Endothelial cell of umbilical vein (primary cell): ENCODE measurements at regions of chr17 and their contacts with region 1.

Region 1: GRCh38 chr17:9007052-9007714 is 14.1 kb upstream of the NTN1 start:
- DNase-seq: no peak
- H3K4me3 ChIP-seq: no peak overlapping the region
- H3K27ac ChIP-seq: no peak overlapping the region
- H3K4me1 ChIP-seq: no peaks in the 10 kb centered on the region
- H3K27me3 ChIP-seq: peaks cover 26% of the 10 kb centered on the region in 2 experiments
- CTCF ChIP-seq: no peak
- POLR2A ChIP-seq: no peak

Region 2: DNA sequence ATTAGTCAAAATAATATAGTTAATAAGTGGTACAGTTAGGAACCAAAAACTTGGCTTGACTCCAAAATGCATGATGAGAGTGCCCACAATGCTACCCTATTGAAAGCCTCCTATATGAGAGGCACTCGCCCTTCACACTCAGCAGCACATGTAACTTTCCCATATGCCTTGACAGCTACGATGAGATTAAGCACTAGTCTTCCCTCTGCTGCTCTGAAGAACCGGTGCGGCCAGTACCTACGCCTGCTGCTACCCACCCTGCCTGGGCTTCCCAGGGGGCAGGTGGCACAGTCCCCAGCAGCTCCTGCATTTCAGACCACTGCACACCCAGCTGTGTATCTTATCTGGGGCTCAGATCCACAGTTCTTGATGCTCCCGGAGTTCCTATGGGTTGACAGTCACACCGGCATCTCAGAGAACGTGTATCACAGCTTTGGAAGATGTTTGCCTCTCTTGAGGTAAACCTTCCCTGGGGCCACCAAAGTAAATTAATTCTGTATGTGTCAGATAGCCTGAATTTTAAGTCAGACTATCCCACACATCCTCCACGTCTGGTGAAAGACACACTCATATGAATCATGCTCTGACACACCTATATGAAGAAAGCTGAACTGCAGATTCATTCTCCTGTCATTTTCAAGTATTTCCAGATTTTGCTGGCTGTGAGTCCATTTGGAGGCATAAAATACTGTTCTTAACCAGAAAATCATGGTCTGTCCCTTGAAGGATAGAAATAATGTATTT is 454.4 kb before region 1 on chr17:
- CTCF ChIA-PET with region 1: no interaction called
- POLR2A ChIA-PET with region 1: no interaction called
- dilution Hi-C with region 1: no loop called
- intact Hi-C with region 1: no loop called
- DNase-seq: no peak
- H3K4me3 ChIP-seq: no peak overlapping the region
- H3K27ac ChIP-seq: no peak overlapping the region
- H3K4me1 ChIP-seq: no peaks in the 10 kb centered on the region
- H3K27me3 ChIP-seq: no peaks in the 10 kb centered on the region
- CTCF ChIP-seq: no peak
- POLR2A ChIP-seq: no peak

Region 3: GRCh38 chr17:9028202-9028987 is 21.2 kb after region 1 on chr17:
- CTCF ChIA-PET with region 1: no interaction called
- POLR2A ChIA-PET with region 1: no interaction called
- dilution Hi-C with region 1: no loop called
- intact Hi-C with region 1: no loop called
- DNase-seq: no peak
- H3K4me3 ChIP-seq: no peak overlapping the region
- H3K27ac ChIP-seq: no peak overlapping the region
- H3K4me1 ChIP-seq: no peaks in the 10 kb centered on the region
- H3K27me3 ChIP-seq: peaks cover 11 to 21% of the 10 kb centered on the region in 2 experiments
- CTCF ChIP-seq: no peak
- POLR2A ChIP-seq: no peak

Region 4: GRCh38 chr17:9052921-9053320 is 45.7 kb after region 1 on chr17:
- CTCF ChIA-PET with region 1: no interaction called
- POLR2A ChIA-PET with region 1: interaction called, 16 read pairs
- dilution Hi-C with region 1: no loop called
- intact Hi-C with region 1: no loop called
- DNase-seq: no peak
- H3K4me3 ChIP-seq: no peak overlapping the region
- H3K27ac ChIP-seq: no peak overlapping the region
- H3K4me1 ChIP-seq: no peaks in the 10 kb centered on the region
- H3K27me3 ChIP-seq: no peaks in the 10 kb centered on the region
- CTCF ChIP-seq: no peak
- POLR2A ChIP-seq: no peak

Region 5: DNA sequence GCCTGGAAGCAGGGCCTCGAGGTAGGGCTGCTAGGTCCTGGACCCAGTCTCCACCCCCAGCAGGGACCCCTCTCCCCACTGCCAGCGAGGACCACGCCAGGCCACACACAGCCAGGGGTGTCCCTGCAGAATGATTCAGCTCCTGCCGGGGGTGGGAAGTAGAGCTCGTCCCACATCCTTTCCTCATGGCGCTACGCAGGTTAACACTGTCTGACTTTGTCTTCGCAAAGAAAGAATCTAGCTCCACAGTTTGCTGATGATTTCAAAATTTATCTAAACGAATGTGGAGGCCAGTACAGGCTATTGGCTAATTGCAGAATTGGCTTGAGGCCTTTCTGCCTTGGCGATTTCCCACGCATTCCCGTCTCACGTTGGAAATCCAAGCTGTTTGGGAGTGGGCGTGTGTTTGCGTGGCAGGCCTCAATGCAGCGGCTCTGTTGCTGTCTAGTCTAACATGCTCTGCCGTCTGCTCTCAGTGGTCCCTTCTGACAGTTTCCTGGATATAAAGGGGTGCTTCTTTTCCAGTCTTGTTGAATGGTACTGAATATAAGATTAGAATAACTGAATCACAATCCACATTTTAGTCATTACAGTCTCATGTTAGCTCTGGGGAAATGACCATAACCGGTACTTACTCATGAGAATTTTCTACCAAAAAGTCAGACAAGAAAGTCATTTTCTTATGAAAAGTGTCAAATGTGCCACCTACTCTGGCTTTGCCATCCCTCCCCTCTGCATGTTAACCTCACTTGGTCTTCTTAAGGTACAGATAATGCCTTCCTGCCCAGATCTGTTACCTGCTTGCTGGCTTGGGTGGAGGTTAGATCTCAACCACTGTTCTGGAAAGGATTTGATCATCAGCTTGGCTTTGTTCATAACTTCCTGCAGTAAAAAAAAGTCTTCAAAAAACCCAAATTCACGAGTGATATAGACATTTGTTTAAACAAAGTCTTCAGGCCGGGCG is 266.5 kb after region 1 on chr17:
- CTCF ChIA-PET with region 1: no interaction called
- POLR2A ChIA-PET with region 1: no interaction called
- dilution Hi-C with region 1: no loop called
- intact Hi-C with region 1: no loop called
- DNase-seq: no peak
- H3K4me3 ChIP-seq: no peak overlapping the region
- H3K27ac ChIP-seq: no peak overlapping the region
- H3K4me1 ChIP-seq: no peaks in the 10 kb centered on the region
- H3K27me3 ChIP-seq: no peaks in the 10 kb centered on the region
- CTCF ChIP-seq: no peak
- POLR2A ChIP-seq: no peak

Region 6: DNA sequence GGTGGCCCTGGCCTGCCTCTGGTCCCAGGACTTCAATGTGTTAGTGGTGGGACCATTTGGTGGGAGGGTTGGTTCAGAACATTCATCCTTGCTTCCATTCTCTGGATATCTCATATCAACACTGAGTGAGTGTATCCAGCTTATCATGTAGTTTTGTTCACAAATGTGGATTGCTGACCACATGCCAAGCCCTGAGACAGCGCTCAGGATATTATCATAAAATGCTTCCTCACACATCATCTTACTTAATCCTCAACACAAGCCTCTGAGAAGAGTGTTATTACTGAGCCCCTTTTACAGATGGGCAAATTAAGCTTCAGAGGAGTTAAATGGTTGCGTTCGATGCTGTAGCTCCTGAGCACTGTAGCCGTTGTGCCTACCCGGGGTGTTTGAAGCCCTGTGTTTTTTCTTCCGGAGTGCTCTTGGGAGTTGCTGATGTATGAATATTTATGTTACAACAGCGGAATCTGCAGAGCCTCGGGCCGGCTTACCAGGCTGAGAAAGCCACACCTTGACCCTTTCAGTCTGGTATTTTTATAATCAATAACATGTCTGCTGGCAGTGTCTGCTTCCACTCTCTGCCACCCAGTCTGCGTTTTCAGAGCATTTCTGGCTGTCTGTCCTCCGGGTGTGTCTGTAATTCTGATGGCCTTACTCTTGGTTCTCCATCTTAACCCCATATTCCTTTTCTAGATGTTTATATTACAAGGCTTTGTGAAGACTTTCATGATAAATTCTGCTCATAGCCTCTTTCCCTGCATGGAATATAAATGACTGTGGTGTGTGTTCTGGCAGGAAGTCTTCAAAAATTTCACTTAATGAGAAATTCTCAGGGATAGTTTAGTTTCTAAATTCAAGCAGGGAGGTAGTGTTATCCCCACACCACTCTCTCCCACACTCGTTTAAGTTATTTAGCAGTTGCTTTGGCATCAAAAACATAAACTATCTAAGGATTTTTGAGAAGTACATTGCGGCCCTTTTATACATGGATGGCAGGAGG is 821.4 kb after region 1 on chr17:
- CTCF ChIA-PET with region 1: no interaction called
- POLR2A ChIA-PET with region 1: no interaction called
- dilution Hi-C with region 1: no loop called
- intact Hi-C with region 1: no loop called
- DNase-seq: no peak
- H3K4me3 ChIP-seq: no peak overlapping the region
- H3K27ac ChIP-seq: no peak overlapping the region
- H3K4me1 ChIP-seq: no peaks in the 10 kb centered on the region
- H3K27me3 ChIP-seq: no peaks in the 10 kb centered on the region
- CTCF ChIP-seq: no peak
- POLR2A ChIP-seq: no peak